CD8-positive, alpha-beta memory T cell (primary cell): ENCODE measurements at regions of chr22 and their contacts with region 1.

Region 1: DNA sequence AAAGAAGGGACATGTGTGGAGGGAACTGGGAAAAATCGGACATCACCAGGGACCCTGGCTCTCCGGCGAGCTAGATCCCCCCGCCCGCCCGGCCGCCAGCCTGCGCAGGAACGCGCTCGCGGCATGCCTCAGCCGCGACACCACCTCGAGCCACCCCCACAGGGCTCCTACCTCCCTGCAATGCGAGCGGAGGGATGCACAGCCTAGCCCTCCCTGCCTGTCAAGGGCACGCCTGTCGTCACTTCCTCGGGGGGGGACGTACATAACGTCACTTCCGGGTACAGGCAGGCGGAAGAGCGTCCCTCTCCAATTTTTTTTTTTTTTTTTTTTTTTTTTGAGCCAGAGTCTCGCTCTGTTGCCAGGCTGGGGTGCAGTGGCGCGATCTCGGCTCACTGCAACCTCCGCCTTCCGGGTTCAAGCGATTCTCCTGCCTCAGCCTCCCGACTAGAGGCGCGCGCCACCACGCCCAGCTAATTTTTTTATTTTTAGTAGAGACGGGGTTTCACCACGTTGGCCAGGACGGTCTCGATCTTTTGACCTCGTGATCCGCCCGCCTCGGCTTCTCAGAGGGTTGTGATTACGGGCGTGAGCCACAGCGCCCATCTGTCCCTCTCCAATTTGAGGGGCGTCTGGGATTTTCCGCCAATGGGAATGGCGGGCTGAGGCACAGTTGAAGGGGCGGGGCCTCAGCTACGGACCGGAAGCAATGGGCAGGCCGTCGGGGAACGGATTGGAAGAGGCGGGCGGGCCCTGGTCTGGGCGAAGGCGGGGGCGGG is at the start of gene TXN2:
- DNase-seq: peak; percentile 93 to 99 (median 96)
- H3K4me3 ChIP-seq: peak within 1 kb of the TSS; percentile 75
- H3K4me3 Mint-ChIP-seq: peak within 1 kb of the TSS; percentile 90 to 100 (median 98)
- H3K27ac ChIP-seq: peak within 1 kb of the TSS; percentile 77
- H3K27ac Mint-ChIP-seq: peak within 1 kb of the TSS; percentile 98 to 99 (median 99)
- H3K4me1 ChIP-seq: peaks cover 16% of the 10 kb centered on the region
- H3K4me1 Mint-ChIP-seq: peaks cover 16 to 29% (median 23%) of the 10 kb centered on the region in 3 donors
- H3K27me3 ChIP-seq: no peaks in the 10 kb centered on the region
- H3K27me3 Mint-ChIP-seq: peaks cover 0 to 4% of the 10 kb centered on the region in 2 donors
- total RNA-seq, gene TXN2: 122 to 126 TPM

Region 2: DNA sequence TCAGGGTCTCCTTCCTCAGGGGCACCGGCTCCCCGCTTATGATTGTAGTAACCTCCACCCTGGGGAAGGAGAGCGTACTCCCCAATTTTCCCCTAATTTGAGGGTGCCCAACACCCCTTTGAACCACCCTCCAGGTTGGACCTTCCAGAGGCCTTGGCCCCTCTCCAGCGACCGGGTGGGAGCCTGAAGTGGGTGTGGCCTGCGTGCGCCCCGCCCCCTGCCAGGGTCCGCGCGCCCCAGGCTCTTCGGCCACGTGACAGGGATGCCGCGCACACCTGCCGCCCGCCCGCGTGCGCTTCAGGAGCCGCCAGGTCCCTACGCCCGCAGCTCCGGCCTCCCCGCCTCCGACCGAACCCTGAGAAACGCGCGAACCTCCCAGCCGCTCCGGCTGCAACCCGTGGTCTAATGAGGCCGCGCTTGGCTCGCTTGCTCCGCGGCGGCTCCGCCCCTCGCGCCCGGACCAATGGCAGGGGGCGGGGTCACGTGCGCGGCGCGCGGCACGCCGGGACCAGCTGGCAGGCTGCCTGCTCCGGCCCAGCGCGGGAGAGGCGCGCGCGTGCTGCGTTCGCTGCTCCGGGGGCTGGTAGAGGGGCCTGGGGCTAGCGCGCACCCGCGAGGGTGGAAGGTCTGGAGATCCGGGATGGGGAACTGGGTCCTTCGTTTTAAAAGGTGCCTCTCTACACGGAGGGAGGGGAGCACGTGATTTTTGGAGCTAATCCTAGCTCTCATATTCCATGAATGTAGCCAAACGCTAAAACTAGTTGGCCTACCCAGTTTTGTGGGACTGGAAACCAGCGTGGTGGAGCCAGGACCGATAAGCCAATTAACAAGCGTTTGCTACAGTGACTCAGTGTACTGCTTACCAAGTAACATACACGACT is 25.3 kb after region 1 on chr22 and contains the start of gene FOXRED2:
- CTCF ChIA-PET with region 1: interaction called, 8 read pairs
- POLR2A ChIA-PET with region 1: interaction called, 11 read pairs
- DNase-seq: peak; percentile 85 to 91 (median 88)
- H3K4me3 ChIP-seq: peak within 1 kb of the TSS; percentile 41
- H3K4me3 Mint-ChIP-seq: peak within 1 kb of the TSS; percentile 10 to 86 (median 70)
- H3K27ac ChIP-seq: peak within 1 kb of the TSS; percentile 34
- H3K27ac Mint-ChIP-seq: peak within 1 kb of the TSS in 7 of 8 donors; percentile 16 to 88 (median 76)
- H3K4me1 ChIP-seq: peaks cover 10% of the 10 kb centered on the region
- H3K4me1 Mint-ChIP-seq: peaks cover 9 to 29% (median 11%) of the 10 kb centered on the region in 3 donors
- H3K27me3 ChIP-seq: no peaks in the 10 kb centered on the region
- H3K27me3 Mint-ChIP-seq: no peaks in the 10 kb centered on the region
- total RNA-seq, gene FOXRED2: 23.7 to 27.6 TPM

Region 3: GRCh38 chr22:36659762-36660509 is 178.4 kb after region 1 on chr22:
- CTCF ChIA-PET with region 1: no interaction called
- POLR2A ChIA-PET with region 1: no interaction called
- DNase-seq: no peak
- H3K4me3 ChIP-seq: no peak overlapping the region
- H3K4me3 Mint-ChIP-seq: no peak overlapping the region
- H3K27ac ChIP-seq: no peak overlapping the region
- H3K27ac Mint-ChIP-seq: peak overlapping the region in 1 of 8 donors; percentile 12
- H3K4me1 ChIP-seq: no peaks in the 10 kb centered on the region
- H3K4me1 Mint-ChIP-seq: no peaks in the 10 kb centered on the region
- H3K27me3 ChIP-seq: no peaks in the 10 kb centered on the region
- H3K27me3 Mint-ChIP-seq: peaks cover 9 to 73% of the 10 kb centered on the region in 2 donors